HepG2 (cell line): ENCODE measurements at regions of chr2 and their contacts with region 1.

Region 1: GRCh38 chr2:105114551-105114950 is 76.7 kb downstream of the MRPS9 start:
- DNase-seq: peak; percentile 70
- ATAC-seq: peak; percentile 60; the same call in 2 of the 3 replicates
- H3K4me3 ChIP-seq: no peak overlapping the region
- H3K27ac ChIP-seq: no peak overlapping the region
- H3K4me1 ChIP-seq: no peaks in the 10 kb centered on the region
- H3K27me3 ChIP-seq: no peaks in the 10 kb centered on the region; a peak in 2 of 5 replicates
- CTCF ChIP-seq: peak; percentile 84
- EP300 ChIP-seq: no peak
- POLR2A ChIP-seq: no peak
- RAD21 ChIP-seq: peak; percentile 72

Region 2: DNA sequence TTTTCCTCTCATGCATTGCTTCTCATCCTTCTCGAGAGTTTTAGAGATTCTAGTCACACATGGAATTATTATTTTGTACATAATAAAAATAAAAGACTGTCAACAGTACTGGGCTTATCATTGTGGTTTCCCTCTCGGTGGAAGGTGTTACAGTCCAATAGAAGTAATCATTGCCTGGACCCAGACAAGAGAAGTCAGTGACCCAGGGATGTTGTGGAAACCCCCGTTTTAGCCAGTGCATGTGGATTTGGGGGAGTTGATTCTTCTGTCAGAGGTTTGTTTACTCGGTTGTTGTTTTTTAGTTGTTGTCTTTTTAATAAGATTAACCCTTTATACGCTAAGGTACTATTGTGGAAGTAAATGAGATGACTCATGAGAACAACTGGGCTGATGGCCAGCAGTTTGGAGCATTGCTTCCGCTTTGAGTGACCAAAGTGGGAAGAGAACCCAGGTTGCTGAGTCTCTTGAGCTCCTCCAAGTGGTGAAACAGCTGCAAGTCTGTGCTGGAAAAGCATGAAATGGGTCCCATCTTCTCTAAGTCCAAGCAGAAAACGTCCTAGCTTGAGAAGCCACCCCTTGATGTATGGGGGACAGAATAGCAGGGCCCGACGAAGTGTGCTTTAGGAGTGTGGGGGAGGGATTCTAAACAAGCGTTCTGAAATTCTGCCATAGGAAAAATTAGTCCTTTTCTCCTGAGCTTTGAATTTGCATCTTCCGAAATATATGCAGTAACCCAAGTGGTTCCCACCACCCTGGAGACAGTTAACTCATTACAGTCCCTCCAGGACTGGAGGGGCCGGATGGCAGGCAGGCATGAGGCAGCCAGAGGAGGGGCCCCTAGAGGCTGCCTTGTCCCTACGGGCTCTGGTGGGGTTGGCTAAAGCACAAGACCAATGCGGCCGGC is 65.2 kb after region 1 on chr2:
- CTCF ChIA-PET with region 1: interaction called, 7 read pairs
- POLR2A ChIA-PET with region 1: no interaction called
- in situ Hi-C with region 1: no loop called
- intact Hi-C with region 1: loop called (anchors 2 kb)
- DNase-seq: peak; percentile 51
- ATAC-seq: peak; percentile 77
- H3K4me3 ChIP-seq: no peak overlapping the region
- H3K27ac ChIP-seq: no peak overlapping the region
- H3K4me1 ChIP-seq: peaks cover 6% of the 10 kb centered on the region
- H3K27me3 ChIP-seq: peaks cover 3 to 47% of the 10 kb centered on the region in 2 experiments; a peak in 4 of 5 replicates
- CTCF ChIP-seq: peak; percentile 61
- EP300 ChIP-seq: no peak
- POLR2A ChIP-seq: no peak
- RAD21 ChIP-seq: no peak

Region 3: GRCh38 chr2:105235388-105236054 is 121.0 kb after region 1 on chr2:
- CTCF ChIA-PET with region 1: interaction called, 50 read pairs
- POLR2A ChIA-PET with region 1: no interaction called
- in situ Hi-C with region 1: loop called (anchors 5 kb)
- intact Hi-C with region 1: loop called (anchors 1 kb)
- DNase-seq: peak; percentile 74
- ATAC-seq: peak; percentile 85
- H3K4me3 ChIP-seq: no peak overlapping the region
- H3K27ac ChIP-seq: no peak overlapping the region
- H3K4me1 ChIP-seq: no peaks in the 10 kb centered on the region
- H3K27me3 ChIP-seq: peaks cover 0 to 9% of the 10 kb centered on the region in 2 experiments; a peak in 3 of 5 replicates
- CTCF ChIP-seq: peak; percentile 76
- EP300 ChIP-seq: no peak
- POLR2A ChIP-seq: no peak
- RAD21 ChIP-seq: peak; percentile 54

Region 4: GRCh38 chr2:105294844-105295481 is 180.4 kb after region 1 on chr2:
- CTCF ChIA-PET with region 1: interaction called, 3 read pairs
- POLR2A ChIA-PET with region 1: no interaction called
- in situ Hi-C with region 1: no loop called
- intact Hi-C with region 1: loop called (anchors 1 kb)
- DNase-seq: peak; percentile 59
- ATAC-seq: peak; percentile 90
- H3K4me3 ChIP-seq: no peak overlapping the region
- H3K27ac ChIP-seq: no peak overlapping the region
- H3K4me1 ChIP-seq: no peaks in the 10 kb centered on the region
- H3K27me3 ChIP-seq: no peaks in the 10 kb centered on the region
- CTCF ChIP-seq: peak; percentile 69
- EP300 ChIP-seq: no peak
- POLR2A ChIP-seq: no peak
- RAD21 ChIP-seq: 0 out of 2 replicates have a peak, but pooled peaks have one; percentile 22